ENCODE measurements at regions of chr1 and their contacts with region 1.

Region 1: GRCh38 chr1:21963477-21964217 is 13.2 kb upstream of the CELA3B start:
- DNase-seq: peak; percentile 88
- ATAC-seq: peak; percentile 98
- H3K4me3 Mint-ChIP-seq: no peak overlapping the region
- H3K27ac Mint-ChIP-seq: peak overlapping the region; percentile 71
- H3K4me1 Mint-ChIP-seq: peaks cover 4% of the 10 kb centered on the region
- H3K27me3 Mint-ChIP-seq: no peaks in the 10 kb centered on the region

Region 2: DNA sequence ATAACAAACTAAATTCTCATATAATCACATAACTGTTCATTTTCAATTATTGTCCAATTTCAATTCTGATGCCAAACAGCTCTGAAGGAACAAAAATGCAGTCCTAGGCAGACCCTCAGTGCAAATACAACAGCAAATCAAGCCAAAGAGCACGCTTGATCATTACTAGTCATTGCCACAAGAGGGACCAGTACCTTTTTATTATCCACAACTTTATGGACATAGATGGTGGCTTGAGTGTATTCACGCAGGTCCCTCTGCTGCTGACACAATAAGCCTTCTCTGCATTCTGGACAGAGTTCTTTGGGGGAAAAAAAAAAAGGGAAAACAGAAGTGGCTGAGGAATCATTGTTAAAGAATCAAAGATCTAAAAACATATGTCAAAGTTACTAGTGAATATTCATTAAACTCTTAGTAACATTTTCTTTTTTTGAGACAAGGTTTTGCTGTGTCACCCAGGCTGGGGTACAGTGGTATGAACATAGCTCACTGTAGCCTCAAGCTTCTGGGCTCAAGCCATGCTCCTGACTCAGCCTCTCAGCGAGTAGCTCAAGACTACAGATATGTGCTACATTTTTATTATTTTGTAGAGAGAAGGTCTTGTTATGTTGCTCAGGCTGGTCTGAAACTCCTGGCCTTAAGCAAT is 260.2 kb before region 1 on chr1:
- CTCF ChIA-PET with region 1: interaction called, 10 read pairs
- POLR2A ChIA-PET with region 1: no interaction called
- DNase-seq: no peak
- ATAC-seq: no peak
- H3K4me3 Mint-ChIP-seq: no peak overlapping the region
- H3K27ac Mint-ChIP-seq: no peak overlapping the region
- H3K4me1 Mint-ChIP-seq: peaks cover 28% of the 10 kb centered on the region
- H3K27me3 Mint-ChIP-seq: no peaks in the 10 kb centered on the region

Region 3: GRCh38 chr1:21919520-21919919 is 44.1 kb before region 1 on chr1:
- CTCF ChIA-PET with region 1: no interaction called
- POLR2A ChIA-PET with region 1: no interaction called
- DNase-seq: no peak
- ATAC-seq: no peak
- H3K4me3 Mint-ChIP-seq: no peak overlapping the region
- H3K27ac Mint-ChIP-seq: no peak overlapping the region
- H3K4me1 Mint-ChIP-seq: no peaks in the 10 kb centered on the region
- H3K27me3 Mint-ChIP-seq: no peaks in the 10 kb centered on the region

Region 4: GRCh38 chr1:21931171-21932093 is 32.2 kb before region 1 on chr1:
- CTCF ChIA-PET with region 1: no interaction called
- POLR2A ChIA-PET with region 1: no interaction called
- DNase-seq: no peak
- ATAC-seq: no peak
- H3K4me3 Mint-ChIP-seq: no peak overlapping the region
- H3K27ac Mint-ChIP-seq: no peak overlapping the region
- H3K4me1 Mint-ChIP-seq: peaks cover 12% of the 10 kb centered on the region
- H3K27me3 Mint-ChIP-seq: peaks cover 13% of the 10 kb centered on the region

Region 5: GRCh38 chr1:22001409-22001808 is 37.8 kb after region 1 on chr1 and contains the start of gene CELA3A:
- CTCF ChIA-PET with region 1: no interaction called
- POLR2A ChIA-PET with region 1: no interaction called
- DNase-seq: no peak
- ATAC-seq: no peak
- H3K4me3 Mint-ChIP-seq: no peak within 1 kb of the TSS
- H3K27ac Mint-ChIP-seq: no peak within 1 kb of the TSS
- H3K4me1 Mint-ChIP-seq: no peaks in the 10 kb centered on the region
- H3K27me3 Mint-ChIP-seq: no peaks in the 10 kb centered on the region
- total RNA-seq, gene CELA3A: not detected

Measured in activated CD8-positive, alpha-beta T cell treated with anti-CD3 and anti-CD28 coated beads, Interleukin-2, amount 10 ng/mL, durations not matched to agents 7 days and 5 days (primary cell).